ENCODE measurements at regions of chr10 and their contacts with region 1.

Region 1: GRCh38 chr10:79286318-79286951 is 60.8 kb upstream of the PPIF start:
- DNase-seq: peak; percentile 76 to 92
- ATAC-seq: peak; percentile 85 to 95 (median 92)
- H3K4me3 ChIP-seq: no peak overlapping the region
- H3K4me3 Mint-ChIP-seq: peak overlapping the region; percentile 83
- H3K27ac ChIP-seq: peak overlapping the region; percentile 97
- H3K27ac Mint-ChIP-seq: peak overlapping the region; percentile 95 to 98
- H3K4me1 ChIP-seq: peaks cover 63% of the 10 kb centered on the region
- H3K4me1 Mint-ChIP-seq: peaks cover 49 to 81% of the 10 kb centered on the region in 2 donors
- H3K27me3 ChIP-seq: no peaks in the 10 kb centered on the region
- H3K27me3 Mint-ChIP-seq: no peaks in the 10 kb centered on the region
- CTCF ChIP-seq: no peak

Region 2: GRCh38 chr10:79127151-79127961 is 159.1 kb before region 1 on chr10:
- intact Hi-C with region 1: no loop called
- DNase-seq: no peak
- ATAC-seq: no peak
- H3K4me3 ChIP-seq: no peak overlapping the region
- H3K4me3 Mint-ChIP-seq: no peak overlapping the region
- H3K27ac ChIP-seq: no peak overlapping the region
- H3K27ac Mint-ChIP-seq: no peak overlapping the region
- H3K4me1 ChIP-seq: peaks cover 28% of the 10 kb centered on the region
- H3K4me1 Mint-ChIP-seq: peaks cover 9 to 55% of the 10 kb centered on the region in 2 donors
- H3K27me3 ChIP-seq: no peaks in the 10 kb centered on the region
- H3K27me3 Mint-ChIP-seq: no peaks in the 10 kb centered on the region
- CTCF ChIP-seq: no peak

Region 3: GRCh38 chr10:79243181-79244067 is 43.0 kb before region 1 on chr10:
- intact Hi-C with region 1: loop called (anchors 1 kb)
- DNase-seq: peak; percentile 33 to 79
- ATAC-seq: peak; percentile 55 to 73 (median 67)
- H3K4me3 ChIP-seq: peak overlapping the region; percentile 29
- H3K4me3 Mint-ChIP-seq: peak overlapping the region; percentile 87
- H3K27ac ChIP-seq: peak overlapping the region; percentile 73
- H3K27ac Mint-ChIP-seq: peak overlapping the region; percentile 85
- H3K4me1 ChIP-seq: peaks cover 74% of the 10 kb centered on the region
- H3K4me1 Mint-ChIP-seq: peaks cover 59 to 72% of the 10 kb centered on the region in 2 donors
- H3K27me3 ChIP-seq: no peaks in the 10 kb centered on the region
- H3K27me3 Mint-ChIP-seq: no peaks in the 10 kb centered on the region
- CTCF ChIP-seq: no peak

Region 4: GRCh38 chr10:79316671-79317431 is 30.4 kb after region 1 on chr10:
- intact Hi-C with region 1: loop called (anchors 2 kb)
- DNase-seq: peak in 1 of 2 donors; percentile 48
- ATAC-seq: peak in 2 of 3 donors; percentile 1 to 10
- H3K4me3 ChIP-seq: no peak overlapping the region
- H3K4me3 Mint-ChIP-seq: peak overlapping the region; percentile 80
- H3K27ac ChIP-seq: no peak overlapping the region
- H3K27ac Mint-ChIP-seq: peak overlapping the region; percentile 79 to 80
- H3K4me1 ChIP-seq: peaks cover 55% of the 10 kb centered on the region
- H3K4me1 Mint-ChIP-seq: peaks cover 55 to 68% of the 10 kb centered on the region in 2 donors
- H3K27me3 ChIP-seq: no peaks in the 10 kb centered on the region
- H3K27me3 Mint-ChIP-seq: no peaks in the 10 kb centered on the region
- CTCF ChIP-seq: no peak

Measured in natural killer cell (primary cell).